Heart right ventricle (tissue), 16 donors: ENCODE measurements at regions of chr22 and their contacts with region 1.

Region 1: DNA sequence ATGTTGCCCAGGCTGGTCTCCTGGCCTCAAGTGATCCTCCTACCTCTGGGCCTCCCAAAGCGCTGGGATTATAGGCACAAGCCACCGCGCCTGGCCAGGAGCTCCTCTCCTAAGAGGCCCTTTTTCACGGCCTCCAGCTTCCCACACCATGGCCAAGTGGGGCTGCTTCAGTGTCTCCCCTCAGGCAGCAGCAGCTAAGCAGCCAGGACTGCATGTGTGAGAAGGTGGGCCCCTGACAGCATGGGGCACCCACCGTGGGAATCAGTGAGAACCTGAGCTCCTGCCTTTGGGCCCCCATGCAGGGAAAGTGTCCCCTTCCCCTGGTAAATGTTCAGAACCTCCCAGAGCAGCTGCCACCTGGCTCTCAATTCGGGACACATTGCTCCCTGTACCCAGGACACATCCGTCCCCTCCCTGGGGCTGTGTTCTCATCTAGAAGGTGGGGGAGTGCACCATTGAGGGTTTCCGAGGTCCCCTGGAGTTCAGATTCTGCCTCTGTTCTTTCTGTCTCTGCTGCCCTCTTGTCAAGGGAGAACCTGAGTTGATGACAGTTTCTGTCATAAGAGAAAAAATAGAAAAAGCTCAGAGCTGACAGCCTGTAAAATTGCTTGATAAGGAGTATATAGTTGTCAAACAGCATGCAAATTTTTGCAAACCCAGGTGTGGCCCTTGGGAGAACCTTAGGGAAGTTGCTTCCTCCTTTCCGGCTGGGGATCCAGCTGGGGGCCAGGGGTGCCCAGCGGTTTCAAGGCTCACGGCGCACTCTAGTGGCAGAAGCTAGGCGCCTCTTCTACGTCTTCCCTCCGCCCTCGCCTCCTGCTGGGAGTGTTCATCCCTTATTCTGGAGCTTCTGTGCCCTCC is 29.7 kb downstream of the FAM83F start:
- DNase-seq: peak; percentile 49 to 68
- ATAC-seq: peak in 7 of 8 donors; percentile 73 to 88 (median 82)
- H3K4me3 ChIP-seq: no peak overlapping the region
- H3K27ac ChIP-seq: no peak overlapping the region
- H3K4me1 ChIP-seq: peaks cover 0 to 8% (median 6%) of the 10 kb centered on the region in 9 donors
- H3K27me3 ChIP-seq: peaks cover 0 to 6% (median 0%) of the 10 kb centered on the region in 7 donors
- CTCF ChIP-seq: peak; percentile 74 to 95 (median 86)

Region 2: GRCh38 chr22:39543095-39543494 is 481.3 kb before region 1 on chr22:
- intact Hi-C with region 1: loop called in 4 of 10 experiments (anchors 5 kb)
- DNase-seq: no peak
- ATAC-seq: no peak
- H3K4me3 ChIP-seq: no peak overlapping the region
- H3K27ac ChIP-seq: no peak overlapping the region
- H3K4me1 ChIP-seq: no peaks in the 10 kb centered on the region
- H3K27me3 ChIP-seq: peaks cover 0 to 53% (median 35%) of the 10 kb centered on the region in 7 donors
- CTCF ChIP-seq: peak in 4 of 9 donors; percentile 12 to 36 (median 26)

Region 3: GRCh38 chr22:39559454-39560105 is 464.9 kb before region 1 on chr22:
- intact Hi-C with region 1: loop called in 2 of 10 experiments (anchors 5 kb)
- DNase-seq: no peak
- ATAC-seq: peak in 3 of 8 donors; percentile 14 to 47 (median 33)
- H3K4me3 ChIP-seq: no peak overlapping the region
- H3K27ac ChIP-seq: no peak overlapping the region
- H3K4me1 ChIP-seq: peaks cover 0 to 8% (median 3%) of the 10 kb centered on the region in 9 donors
- H3K27me3 ChIP-seq: peaks cover 12 to 78% (median 63%) of the 10 kb centered on the region in 7 donors
- CTCF ChIP-seq: peak in 8 of 9 donors; percentile 14 to 45 (median 36)

Region 4: DNA sequence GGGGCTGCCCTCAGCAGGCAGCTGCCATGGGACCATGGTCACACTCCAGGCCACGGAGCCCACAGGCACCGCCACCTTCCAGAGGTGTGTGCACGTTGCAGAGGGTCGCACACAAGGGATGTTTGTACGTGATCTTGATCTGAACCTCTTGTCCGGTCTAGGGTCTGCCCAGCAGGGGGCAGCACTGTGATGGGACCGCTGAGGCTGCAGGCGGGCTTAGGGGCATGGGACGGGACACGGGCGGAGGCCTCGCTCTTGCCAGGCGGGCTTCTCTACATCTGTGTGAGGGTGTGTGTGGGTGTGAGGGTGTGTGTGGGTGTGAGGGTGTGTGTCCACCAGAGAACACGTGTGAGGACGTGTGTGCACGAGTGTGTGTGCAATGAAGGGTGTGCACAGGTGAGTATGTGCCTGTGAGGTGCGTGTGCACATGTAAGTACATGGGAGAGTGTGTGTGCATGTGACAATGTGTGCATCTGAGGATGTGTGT is 401.5 kb before region 1 on chr22:
- intact Hi-C with region 1: loop called in 9 of 10 experiments (anchors 2 to 10 kb)
- DNase-seq: peak; percentile 26 to 66
- ATAC-seq: peak in 7 of 8 donors; percentile 45 to 68 (median 58)
- H3K4me3 ChIP-seq: no peak overlapping the region
- H3K27ac ChIP-seq: no peak overlapping the region
- H3K4me1 ChIP-seq: no peaks in the 10 kb centered on the region
- H3K27me3 ChIP-seq: peaks cover 0 to 92% (median 87%) of the 10 kb centered on the region in 7 donors
- CTCF ChIP-seq: peak; percentile 24 to 65 (median 60)

Region 5: DNA sequence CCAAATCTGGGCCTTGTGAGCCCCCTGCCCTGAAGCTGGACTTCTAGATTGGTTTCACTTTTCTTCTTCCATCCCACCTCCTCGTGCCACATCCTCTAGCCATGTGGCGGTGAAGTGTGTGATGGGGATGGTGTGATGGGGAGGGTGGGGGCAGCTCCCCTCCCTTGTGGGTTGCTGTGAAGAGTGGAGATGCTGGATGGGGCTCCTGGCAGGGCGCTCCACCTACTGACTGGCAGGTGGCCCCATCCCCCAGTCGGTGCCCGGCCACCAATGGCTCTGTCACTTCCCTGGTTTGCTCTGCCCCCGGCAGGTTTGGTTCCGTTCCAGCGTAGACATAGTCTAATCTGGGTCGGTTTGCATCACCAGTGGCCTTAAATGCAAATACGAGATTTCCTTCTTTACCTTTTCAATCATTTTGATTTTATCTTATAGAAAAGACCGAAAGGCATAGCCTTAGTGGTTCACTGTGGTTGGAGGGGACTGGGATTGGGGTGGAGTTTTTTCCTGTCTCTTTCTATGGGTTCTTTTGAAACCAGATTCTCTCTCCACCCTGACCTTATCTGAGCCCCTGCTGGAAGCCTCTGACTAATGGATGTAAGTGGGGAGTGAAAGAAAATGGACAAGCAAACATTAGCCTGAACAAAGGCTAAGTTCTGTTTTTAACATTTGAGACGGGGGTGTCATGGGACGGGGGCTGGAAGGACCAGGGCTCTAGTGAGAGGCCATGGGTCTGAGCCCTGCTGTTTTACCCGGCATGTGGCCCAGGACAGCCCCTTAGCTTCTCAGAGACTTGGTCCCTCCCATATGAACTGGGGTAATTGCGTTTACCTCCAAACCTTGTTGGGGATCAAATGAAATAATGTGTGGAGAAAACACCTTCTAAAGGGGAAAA is 304.6 kb before region 1 on chr22:
- intact Hi-C with region 1: loop called in 1 of 10 experiments (anchors 10 kb)
- DNase-seq: no peak
- ATAC-seq: no peak
- H3K4me3 ChIP-seq: no peak overlapping the region
- H3K27ac ChIP-seq: no peak overlapping the region
- H3K4me1 ChIP-seq: peaks cover 0 to 6% (median 0%) of the 10 kb centered on the region in 9 donors
- H3K27me3 ChIP-seq: peaks cover 0 to 34% (median 11%) of the 10 kb centered on the region in 7 donors
- CTCF ChIP-seq: no peak

Region 6: DNA sequence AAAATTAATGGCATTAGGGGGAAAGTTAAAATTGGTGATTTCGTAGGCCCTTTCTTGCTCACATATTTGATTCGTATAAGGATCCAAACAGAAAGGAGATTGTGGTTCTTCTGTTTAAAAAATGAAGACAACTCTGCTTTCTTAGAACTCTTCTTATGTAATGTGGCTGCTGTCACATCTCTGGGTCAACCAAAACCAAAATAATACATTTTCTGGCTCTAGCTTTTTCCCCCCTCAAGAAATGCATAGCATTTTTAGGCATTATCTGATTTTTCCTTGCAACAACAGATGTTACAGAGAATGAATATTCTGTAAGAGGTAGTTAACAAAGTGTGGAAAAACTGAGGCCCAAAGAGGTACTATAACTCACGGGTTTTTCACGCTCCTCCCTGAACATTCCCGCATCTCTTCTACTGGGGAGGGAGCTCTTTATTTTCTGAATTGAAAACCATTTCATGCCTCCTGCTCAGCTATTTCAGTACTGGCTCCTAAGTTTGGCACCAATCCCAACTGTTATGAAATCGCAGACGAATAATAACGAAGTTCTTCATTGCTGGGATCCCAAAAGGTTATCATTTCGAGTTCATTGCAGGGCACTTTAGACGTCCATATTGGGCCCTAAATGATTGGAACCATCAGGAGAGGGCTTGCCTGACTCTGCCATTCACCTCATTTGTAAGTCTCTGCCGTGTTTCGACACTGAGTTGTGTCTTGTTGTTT is 106.5 kb before region 1 on chr22:
- intact Hi-C with region 1: no loop called
- DNase-seq: no peak
- ATAC-seq: no peak
- H3K4me3 ChIP-seq: no peak overlapping the region
- H3K27ac ChIP-seq: no peak overlapping the region
- H3K4me1 ChIP-seq: peaks cover 0 to 14% (median 0%) of the 10 kb centered on the region in 9 donors
- H3K27me3 ChIP-seq: peaks cover 0 to 46% (median 16%) of the 10 kb centered on the region in 7 donors
- CTCF ChIP-seq: no peak

Region 7: GRCh38 chr22:39932918-39933649 is 91.3 kb before region 1 on chr22:
- intact Hi-C with region 1: loop called in 2 of 10 experiments (anchors 2 to 10 kb)
- DNase-seq: no peak
- ATAC-seq: no peak
- H3K4me3 ChIP-seq: no peak overlapping the region
- H3K27ac ChIP-seq: no peak overlapping the region
- H3K4me1 ChIP-seq: peaks cover 0 to 32% (median 0%) of the 10 kb centered on the region in 9 donors
- H3K27me3 ChIP-seq: peaks cover 0 to 77% (median 46%) of the 10 kb centered on the region in 7 donors
- CTCF ChIP-seq: peak in 7 of 9 donors; percentile 47 to 69 (median 55)

Region 8: GRCh38 chr22:39946503-39947219 is 77.8 kb before region 1 on chr22:
- intact Hi-C with region 1: loop called in 2 of 10 experiments (anchors 5 to 10 kb)
- DNase-seq: no peak
- ATAC-seq: no peak
- H3K4me3 ChIP-seq: no peak overlapping the region
- H3K27ac ChIP-seq: no peak overlapping the region
- H3K4me1 ChIP-seq: peaks cover 0 to 18% (median 0%) of the 10 kb centered on the region in 9 donors
- H3K27me3 ChIP-seq: peaks cover 0 to 5% (median 0%) of the 10 kb centered on the region in 7 donors
- CTCF ChIP-seq: no peak